Common myeloid progenitor, CD34-positive (primary cell): ENCODE measurements at regions of chr11 and their contacts with region 1.

Region 1: GRCh38 chr11:2885676-2886081 is at the start of gene CDKN1C:
- DNase-seq: peak; percentile 79 to 93 (median 91)
- H3K4me3 ChIP-seq: peak within 1 kb of the TSS; percentile 56 to 79 (median 70)
- H3K27ac ChIP-seq: no peak within 1 kb of the TSS
- H3K4me1 ChIP-seq: peaks cover 0 to 45% (median 34%) of the 10 kb centered on the region in 4 experiments
- H3K27me3 ChIP-seq: no peaks in the 10 kb centered on the region

Region 2: DNA sequence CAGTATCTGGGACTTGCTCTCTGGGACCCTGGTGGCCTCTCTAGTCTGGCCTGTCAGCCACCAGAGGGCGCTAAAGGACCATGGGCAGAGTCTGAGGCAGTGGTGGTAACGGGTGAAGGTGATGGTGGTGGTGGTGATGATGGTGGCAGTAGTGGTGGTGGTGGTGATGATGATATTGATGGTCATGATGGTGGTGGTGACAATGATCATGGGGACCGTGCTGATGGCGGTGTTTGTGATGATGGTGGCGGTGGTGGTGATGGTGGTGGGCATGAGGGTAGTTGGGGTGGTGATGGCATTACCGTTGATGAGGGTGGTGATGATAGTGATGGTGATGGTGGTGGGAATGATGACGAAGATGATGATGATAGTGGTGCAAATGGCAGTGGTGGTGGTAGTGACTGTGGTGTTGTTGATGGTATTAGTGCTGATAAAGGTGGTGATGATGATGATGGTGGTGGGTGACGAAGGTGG is 457.3 kb before region 1 on chr11:
- CTCF ChIA-PET with region 1: interaction called, 64 read pairs
- POLR2A ChIA-PET with region 1: no interaction called
- DNase-seq: peak; percentile 70 to 84 (median 76)
- H3K4me3 ChIP-seq: no peak overlapping the region
- H3K27ac ChIP-seq: no peak overlapping the region
- H3K4me1 ChIP-seq: no peaks in the 10 kb centered on the region
- H3K27me3 ChIP-seq: no peaks in the 10 kb centered on the region

Region 3: DNA sequence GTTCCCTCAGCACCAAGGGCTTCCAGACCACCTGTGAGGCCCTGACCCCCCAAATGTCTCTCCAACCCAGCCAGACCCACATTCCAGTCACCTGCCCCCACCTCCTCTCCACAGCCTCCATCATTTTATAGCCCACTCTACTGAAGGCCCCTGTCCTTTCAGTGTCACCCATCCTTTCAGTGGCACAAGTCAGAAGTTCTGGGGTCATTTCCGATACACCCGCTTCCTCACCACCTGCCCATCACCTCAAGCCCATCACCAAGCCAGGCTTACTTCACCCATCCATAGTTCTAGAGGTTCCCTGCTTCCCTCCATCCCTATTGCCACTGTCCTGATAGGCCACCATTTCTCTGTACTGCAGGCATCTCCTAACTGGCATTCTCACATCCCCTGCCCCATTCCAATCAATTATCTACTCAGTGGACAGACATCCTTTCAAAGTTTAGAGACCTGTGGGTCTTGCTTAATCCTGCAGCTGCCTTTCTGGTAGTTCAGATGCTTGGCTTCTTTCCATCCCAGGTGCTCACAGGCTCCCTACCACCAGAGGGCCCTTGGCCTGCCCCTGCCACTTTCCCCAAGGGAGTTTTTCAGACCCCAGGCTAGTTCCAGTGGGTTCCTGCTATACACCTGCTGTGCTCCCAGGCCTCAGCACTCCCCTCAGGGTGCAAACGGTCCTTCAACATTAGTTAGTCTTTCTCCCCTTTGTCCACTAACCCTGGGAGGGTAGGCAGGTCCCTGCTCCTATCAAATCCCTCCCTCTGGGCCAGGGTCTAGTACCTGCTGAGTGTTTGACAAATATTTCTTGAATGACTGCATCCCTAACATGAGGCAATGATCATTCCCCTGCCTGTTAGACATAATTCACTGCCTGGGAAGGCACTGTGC is 193.4 kb before region 1 on chr11:
- CTCF ChIA-PET with region 1: interaction called, 75 read pairs
- POLR2A ChIA-PET with region 1: interaction called, 8 read pairs
- DNase-seq: peak; percentile 29 to 58 (median 51)
- H3K4me3 ChIP-seq: no peak overlapping the region
- H3K27ac ChIP-seq: no peak overlapping the region
- H3K4me1 ChIP-seq: peaks cover 1 to 50% (median 26%) of the 10 kb centered on the region in 4 experiments
- H3K27me3 ChIP-seq: no peaks in the 10 kb centered on the region

Region 4: DNA sequence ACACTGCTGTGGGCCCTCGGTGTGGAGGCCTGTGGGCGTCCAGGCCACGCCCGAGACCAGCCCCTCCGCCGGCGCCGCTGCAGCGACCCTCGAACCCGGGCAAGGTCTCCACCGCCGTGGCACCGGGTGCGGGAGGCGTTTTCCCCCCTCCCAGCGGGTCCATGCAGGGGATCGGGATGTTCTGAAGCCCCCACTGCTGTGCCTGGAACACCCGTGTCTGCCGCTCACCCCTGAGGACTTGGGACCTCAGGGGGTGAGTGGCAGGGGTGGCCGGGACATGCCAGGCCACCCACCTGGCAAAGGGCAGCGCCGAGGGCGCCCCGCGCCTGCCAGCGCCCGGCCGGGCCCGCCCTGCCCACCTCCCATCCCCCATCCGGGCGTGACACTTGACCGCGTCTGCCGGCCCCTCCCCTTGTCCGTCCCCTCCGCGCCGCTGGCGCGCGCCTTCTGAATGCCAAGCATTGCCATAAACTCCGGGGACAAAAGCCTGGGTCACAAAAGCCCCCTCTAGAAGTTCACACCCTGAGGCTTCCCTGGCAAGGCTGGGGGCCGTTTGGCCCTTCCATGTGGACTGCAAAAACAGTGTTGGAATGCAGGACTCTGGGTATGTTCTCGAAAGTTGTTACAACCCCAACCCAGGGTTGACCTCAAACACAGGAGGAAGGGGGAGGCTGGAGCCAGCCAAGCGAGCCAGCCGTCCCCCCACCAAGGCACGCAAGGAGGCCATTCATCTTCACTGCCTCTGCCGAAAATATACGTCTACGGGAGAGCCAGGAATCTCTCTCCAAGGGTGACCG is 185.1 kb before region 1 on chr11:
- CTCF ChIA-PET with region 1: interaction called, 75 read pairs
- POLR2A ChIA-PET with region 1: interaction called, 8 read pairs
- DNase-seq: peak in 2 of 3 donors; percentile 33 to 34
- H3K4me3 ChIP-seq: peak overlapping the region; percentile 29 to 85 (median 66)
- H3K27ac ChIP-seq: peak overlapping the region in 1 of 2 experiments; percentile 68
- H3K4me1 ChIP-seq: peaks cover 4 to 37% (median 25%) of the 10 kb centered on the region in 4 experiments
- H3K27me3 ChIP-seq: no peaks in the 10 kb centered on the region

Region 5: GRCh38 chr11:2901854-2902783 is 16.4 kb after region 1 on chr11:
- CTCF ChIA-PET with region 1: interaction called, 18 read pairs
- POLR2A ChIA-PET with region 1: no interaction called
- DNase-seq: peak; percentile 67 to 88 (median 86)
- H3K4me3 ChIP-seq: peak overlapping the region in 6 of 7 experiments; percentile 39 to 75 (median 60)
- H3K27ac ChIP-seq: peak overlapping the region in 1 of 2 experiments; percentile 73
- H3K4me1 ChIP-seq: peaks cover 0 to 58% (median 43%) of the 10 kb centered on the region in 4 experiments
- H3K27me3 ChIP-seq: no peaks in the 10 kb centered on the region

Region 6: GRCh38 chr11:2930704-2931428 is 45.2 kb after region 1 on chr11:
- CTCF ChIA-PET with region 1: interaction called, 103 read pairs
- POLR2A ChIA-PET with region 1: interaction called, 3 read pairs
- DNase-seq: peak in 2 of 3 donors; percentile 26 to 34
- H3K4me3 ChIP-seq: peak overlapping the region in 5 of 7 experiments; percentile 19 to 68 (median 47)
- H3K27ac ChIP-seq: no peak overlapping the region
- H3K4me1 ChIP-seq: peaks cover 0 to 59% (median 53%) of the 10 kb centered on the region in 4 experiments
- H3K27me3 ChIP-seq: peaks cover 0 to 46% (median 15%) of the 10 kb centered on the region in 5 experiments